Activated CD4-positive, alpha-beta T cell treated with anti-CD3 and anti-CD28 coated beads, Interleukin-2, amount 10 ng/mL, durations not matched to agents 7 days and 5 days (primary cell): ENCODE measurements at regions of chr12 and their contacts with region 1.

Region 1: GRCh38 chr12:54759751-54760150 is 94.6 kb upstream of the MUCL1 start:
- DNase-seq: peak; percentile 29
- H3K4me3 Mint-ChIP-seq: no peak overlapping the region
- H3K27ac Mint-ChIP-seq: no peak overlapping the region
- H3K4me1 Mint-ChIP-seq: peaks cover 7% of the 10 kb centered on the region
- H3K27me3 Mint-ChIP-seq: peaks cover 18% of the 10 kb centered on the region

Region 2: DNA sequence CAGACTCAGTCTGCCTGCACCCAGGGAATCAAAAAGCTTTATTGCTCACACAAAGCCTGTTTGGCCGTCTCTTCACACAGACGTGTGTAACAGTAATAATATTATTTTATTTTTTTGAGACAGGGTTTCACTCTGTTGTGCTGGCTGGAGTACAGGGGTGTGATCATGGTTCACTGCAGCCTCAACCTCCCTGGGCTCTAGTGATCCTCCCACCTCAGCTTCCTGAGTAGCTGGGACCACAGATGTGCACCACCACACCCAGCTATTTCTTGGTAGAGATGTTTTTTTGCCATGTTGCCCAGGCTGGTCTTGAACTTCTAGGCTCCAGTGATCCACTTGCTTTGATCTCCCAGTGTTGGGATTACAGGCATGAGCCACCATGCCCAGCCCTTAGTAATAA is 23.2 kb before region 1 on chr12:
- CTCF ChIA-PET with region 1: no interaction called
- POLR2A ChIA-PET with region 1: no interaction called
- DNase-seq: peak; percentile 27
- H3K4me3 Mint-ChIP-seq: no peak overlapping the region
- H3K27ac Mint-ChIP-seq: peak overlapping the region; percentile 63
- H3K4me1 Mint-ChIP-seq: peaks cover 56% of the 10 kb centered on the region
- H3K27me3 Mint-ChIP-seq: peaks cover 20% of the 10 kb centered on the region

Region 3: GRCh38 chr12:54749191-54749818 is 10.4 kb before region 1 on chr12:
- CTCF ChIA-PET with region 1: interaction called, 10 read pairs
- POLR2A ChIA-PET with region 1: no interaction called
- DNase-seq: peak; percentile 75
- H3K4me3 Mint-ChIP-seq: peak overlapping the region; percentile 44
- H3K27ac Mint-ChIP-seq: no peak overlapping the region
- H3K4me1 Mint-ChIP-seq: peaks cover 22% of the 10 kb centered on the region
- H3K27me3 Mint-ChIP-seq: peaks cover 19% of the 10 kb centered on the region

Region 4: GRCh38 chr12:54773590-54773989 is 13.8 kb after region 1 on chr12:
- CTCF ChIA-PET with region 1: no interaction called
- POLR2A ChIA-PET with region 1: no interaction called
- DNase-seq: no peak
- H3K4me3 Mint-ChIP-seq: no peak overlapping the region
- H3K27ac Mint-ChIP-seq: no peak overlapping the region
- H3K4me1 Mint-ChIP-seq: peaks cover 18% of the 10 kb centered on the region
- H3K27me3 Mint-ChIP-seq: peaks cover 11% of the 10 kb centered on the region